ENCODE measurements at regions of chr5 and their contacts with region 1.

Region 1: DNA sequence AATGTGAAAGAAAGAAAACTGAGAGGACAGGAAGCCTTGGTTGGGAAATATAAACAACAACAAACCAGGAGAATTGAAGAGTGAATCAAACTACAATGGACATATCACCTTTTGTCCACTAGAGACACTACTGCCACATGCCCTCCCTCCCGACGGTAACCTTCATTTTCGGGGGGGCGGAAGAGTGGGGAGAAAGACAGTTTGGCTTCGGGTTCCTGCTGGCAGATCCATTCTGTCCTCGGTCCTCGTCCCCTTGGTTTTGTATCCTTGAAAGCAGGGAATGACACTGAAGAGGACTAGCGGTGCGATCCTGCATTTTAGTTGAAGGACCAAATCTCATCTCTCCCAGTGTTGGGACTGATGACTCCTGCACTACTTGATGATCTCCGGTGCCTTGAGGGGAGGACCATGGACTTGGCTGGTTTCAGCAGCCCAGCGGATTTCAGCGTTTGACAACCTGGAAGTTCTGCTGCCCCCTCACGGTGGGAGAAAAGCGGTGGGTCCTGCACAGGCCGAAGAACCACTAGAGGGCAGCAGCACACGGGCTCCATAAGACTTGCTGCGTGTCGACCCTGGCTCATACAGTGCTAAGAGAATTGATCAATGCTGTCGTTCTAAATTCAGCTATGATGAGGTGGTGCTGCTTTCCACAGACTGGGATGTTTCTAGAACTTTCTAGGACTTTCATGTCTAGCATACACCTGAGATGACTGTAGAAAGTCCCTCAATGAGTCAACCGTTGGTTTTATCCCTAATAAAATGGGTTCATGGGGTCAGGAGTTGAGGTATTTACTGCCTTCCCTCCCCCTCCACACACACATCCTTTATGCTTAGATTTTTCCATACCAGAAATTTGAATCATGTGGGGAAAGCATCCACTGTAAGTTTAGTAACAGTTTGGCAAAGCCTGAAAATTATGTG is 15.1 kb upstream of the ZNF131 start:
- DNase-seq: peak; percentile 80 to 98
- ATAC-seq: peak; percentile 96 to 98
- H3K4me3 ChIP-seq: peak overlapping the region; percentile 50
- H3K27ac ChIP-seq: peak overlapping the region; percentile 75 to 82
- H3K4me1 ChIP-seq: 0 out of 3 replicates have a peak, but pooled peaks cover 3% of the 10 kb centered on the region
- CTCF ChIP-seq: peak; percentile 100
- EP300 ChIP-seq: no peak
- POLR2A ChIP-seq: no peak
- RAD21 ChIP-seq: peak; percentile 83 to 84

Region 2: DNA sequence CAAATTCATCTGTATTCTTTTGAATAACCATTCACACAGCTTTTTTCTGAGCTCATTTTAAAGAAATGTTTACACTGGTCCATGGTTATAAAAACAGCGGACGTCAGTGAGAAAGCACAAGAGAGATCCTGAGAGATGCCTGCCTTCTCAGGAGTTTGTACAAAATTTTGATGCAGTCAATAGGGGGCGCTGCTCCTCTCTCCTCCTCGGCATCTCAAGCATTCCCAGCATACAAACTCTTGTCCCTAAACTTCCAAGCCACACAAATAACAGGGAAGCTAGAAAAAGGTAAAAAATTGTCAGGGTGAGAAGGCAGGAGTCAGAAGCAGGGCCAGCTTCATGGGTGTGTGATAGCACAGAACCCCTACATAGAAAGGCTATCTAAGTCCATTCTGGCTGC is 360.2 kb before region 1 on chr5:
- CTCF ChIA-PET with region 1: no interaction called
- POLR2A ChIA-PET with region 1: no interaction called
- DNase-seq: peak in 1 of 2 experiments; percentile 11
- ATAC-seq: no peak
- H3K4me3 ChIP-seq: no peak overlapping the region
- H3K27ac ChIP-seq: no peak overlapping the region
- H3K4me1 ChIP-seq: no peaks in the 10 kb centered on the region
- CTCF ChIP-seq: 0 out of 3 replicates have a peak, but pooled peaks have one; percentile 10
- EP300 ChIP-seq: no peak
- POLR2A ChIP-seq: no peak
- RAD21 ChIP-seq: no peak

Region 3: GRCh38 chr5:43073597-43074546 is 31.8 kb before region 1 on chr5:
- CTCF ChIA-PET with region 1: interaction called, 18 read pairs
- POLR2A ChIA-PET with region 1: no interaction called
- DNase-seq: peak; percentile 41 to 64
- ATAC-seq: peak; percentile 64 to 78; a peak in 4 of 6 replicates
- H3K4me3 ChIP-seq: no peak overlapping the region
- H3K27ac ChIP-seq: no peak overlapping the region
- H3K4me1 ChIP-seq: peaks cover 13% of the 10 kb centered on the region
- CTCF ChIP-seq: peak; percentile 51
- EP300 ChIP-seq: no peak
- POLR2A ChIP-seq: no peak
- RAD21 ChIP-seq: peak; percentile 45 to 74

Region 4: GRCh38 chr5:43085453-43085852 is 20.2 kb before region 1 on chr5:
- CTCF ChIA-PET with region 1: interaction called, 12 read pairs
- POLR2A ChIA-PET with region 1: no interaction called
- DNase-seq: no peak
- ATAC-seq: no peak
- H3K4me3 ChIP-seq: no peak overlapping the region
- H3K27ac ChIP-seq: no peak overlapping the region
- H3K4me1 ChIP-seq: no peaks in the 10 kb centered on the region
- CTCF ChIP-seq: no peak
- EP300 ChIP-seq: no peak
- POLR2A ChIP-seq: no peak
- RAD21 ChIP-seq: no peak

Measured in A549 (cell line).